ENCODE measurements at regions of chr14 and their contacts with region 1.

Region 1: DNA sequence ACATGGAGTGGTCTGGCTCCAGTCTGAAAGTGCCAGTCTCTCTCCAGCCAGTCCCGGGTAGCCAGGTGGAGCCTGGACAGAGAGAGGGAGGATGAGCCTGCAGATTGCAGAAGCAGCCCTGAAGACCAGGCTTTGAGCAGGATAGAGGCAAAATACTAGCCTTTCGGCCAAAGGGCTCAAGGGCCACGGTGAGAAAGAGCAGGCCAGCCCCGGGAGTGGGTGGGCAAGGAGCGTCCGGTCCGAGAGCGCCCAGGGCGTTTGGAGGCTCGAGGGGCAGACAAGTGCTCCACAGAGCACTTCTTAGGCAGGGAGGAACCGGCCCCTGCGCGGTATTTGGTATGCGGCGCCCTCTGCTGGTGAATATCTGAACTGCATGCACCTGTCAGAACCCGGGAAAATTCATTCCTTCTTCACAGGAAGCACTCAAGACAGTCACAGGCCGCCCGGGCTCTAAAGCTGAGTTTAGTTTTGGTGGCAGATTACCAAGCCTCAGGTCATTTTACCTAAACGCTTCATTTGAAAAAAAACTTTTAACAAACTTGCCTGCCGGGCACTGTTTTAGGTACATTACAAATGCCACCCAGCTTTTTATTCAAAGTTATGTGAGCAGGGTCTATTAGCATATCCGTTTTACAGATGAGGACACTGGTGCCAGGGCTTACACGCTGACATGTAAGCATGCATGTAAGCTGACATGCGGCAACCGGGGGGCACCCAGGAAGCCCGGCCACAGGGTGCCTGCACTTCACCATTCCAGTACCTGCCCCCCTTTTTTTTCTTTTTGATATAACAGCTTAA is 21.0 kb upstream of the PSMC1 start:
- DNase-seq: peak; percentile 87
- ATAC-seq: peak; percentile 84

Region 2: GRCh38 chr14:89973234-89973823 is 262.0 kb before region 1 on chr14:
- intact Hi-C with region 1: loop called (anchors 1 kb)
- DNase-seq: peak; percentile 73
- ATAC-seq: peak; percentile 81

Region 3: DNA sequence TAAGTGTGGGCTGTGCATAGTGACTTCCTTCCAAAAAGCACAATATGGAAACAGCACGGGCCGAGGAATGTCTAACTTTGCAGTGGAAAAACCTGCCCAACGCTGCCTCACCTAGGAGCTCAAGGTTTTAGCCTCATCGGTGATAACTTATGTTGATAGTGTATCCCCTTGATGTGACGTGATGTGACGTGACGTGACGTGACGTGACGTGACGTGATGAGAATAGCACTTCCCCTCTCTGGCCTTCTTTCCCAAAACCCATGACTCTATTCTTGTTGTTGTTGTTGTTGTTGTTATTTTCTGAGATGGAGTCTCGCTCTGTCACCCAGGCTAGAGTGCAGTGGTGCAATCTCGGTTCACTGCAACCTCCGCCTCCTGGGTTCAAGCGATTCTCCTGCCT is 109.1 kb before region 1 on chr14:
- intact Hi-C with region 1: no loop called
- DNase-seq: no peak
- ATAC-seq: no peak

Region 4: GRCh38 chr14:90191585-90191984 is 43.8 kb before region 1 on chr14:
- intact Hi-C with region 1: no loop called
- DNase-seq: no peak
- ATAC-seq: no peak

Region 5: DNA sequence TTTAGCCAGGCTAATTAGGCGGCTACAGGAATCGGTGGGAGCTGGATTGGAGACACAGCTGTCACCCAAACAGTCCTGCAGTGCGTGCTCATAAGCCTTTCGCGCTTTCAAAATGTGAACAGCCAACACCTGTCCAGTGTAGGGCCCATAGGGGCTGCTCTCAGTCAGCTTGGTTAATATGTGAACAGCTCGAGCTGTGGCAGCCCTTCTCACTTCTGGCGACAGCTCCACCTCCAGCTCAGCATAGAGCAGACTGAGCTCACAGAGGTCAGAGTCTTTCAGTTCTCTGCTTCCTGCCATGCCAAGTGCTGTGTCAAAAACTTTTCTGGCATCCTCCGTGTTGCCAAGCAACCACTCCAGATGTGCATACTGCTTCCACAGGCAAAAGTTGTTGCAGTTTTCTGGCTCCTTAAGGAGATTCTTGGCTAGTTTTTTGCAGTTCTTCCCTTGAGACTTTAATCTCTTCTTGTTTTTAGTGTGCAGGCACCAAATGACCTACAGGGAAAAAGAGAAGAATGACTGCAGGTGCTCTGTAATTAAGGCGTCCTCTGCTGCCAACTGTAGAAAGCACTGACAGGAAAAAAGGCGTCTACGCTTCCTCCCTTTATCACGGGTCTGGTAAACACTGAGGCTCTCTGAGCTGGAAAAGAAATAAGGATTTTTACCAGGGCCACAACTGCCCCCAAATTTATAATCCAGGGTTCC is 53.4 kb after region 1 on chr14:
- intact Hi-C with region 1: no loop called
- DNase-seq: peak; percentile 46
- ATAC-seq: peak; percentile 90

Measured in Right ventricle myocardium inferior (tissue), 1 donor.